ENCODE measurements at regions of chr1 and their contacts with region 1.

Region 1: DNA sequence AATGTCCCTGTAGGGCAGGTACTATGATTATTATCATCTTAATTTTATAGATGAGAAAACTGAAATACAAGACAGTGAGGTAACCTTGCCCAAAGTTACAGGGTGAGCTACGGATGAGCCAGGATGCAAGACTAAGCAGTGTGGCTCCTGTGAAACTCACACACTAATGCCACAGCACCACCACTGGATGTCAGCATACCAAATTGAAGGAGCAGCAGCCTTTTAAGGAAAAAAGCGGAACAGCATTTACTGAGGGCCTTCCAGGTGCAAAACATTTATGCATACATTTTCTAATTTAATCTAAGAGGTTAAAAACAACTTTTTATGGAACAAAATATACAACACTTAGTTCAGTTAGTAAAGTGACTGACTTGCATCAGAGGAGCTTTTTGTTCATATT is 41.7 kb downstream of the SEC16B start:
- DNase-seq: no peak
- H3K4me3 ChIP-seq: no peak overlapping the region
- H3K27me3 ChIP-seq: no peaks in the 10 kb centered on the region
- CTCF ChIP-seq: peak; percentile 43

Region 2: DNA sequence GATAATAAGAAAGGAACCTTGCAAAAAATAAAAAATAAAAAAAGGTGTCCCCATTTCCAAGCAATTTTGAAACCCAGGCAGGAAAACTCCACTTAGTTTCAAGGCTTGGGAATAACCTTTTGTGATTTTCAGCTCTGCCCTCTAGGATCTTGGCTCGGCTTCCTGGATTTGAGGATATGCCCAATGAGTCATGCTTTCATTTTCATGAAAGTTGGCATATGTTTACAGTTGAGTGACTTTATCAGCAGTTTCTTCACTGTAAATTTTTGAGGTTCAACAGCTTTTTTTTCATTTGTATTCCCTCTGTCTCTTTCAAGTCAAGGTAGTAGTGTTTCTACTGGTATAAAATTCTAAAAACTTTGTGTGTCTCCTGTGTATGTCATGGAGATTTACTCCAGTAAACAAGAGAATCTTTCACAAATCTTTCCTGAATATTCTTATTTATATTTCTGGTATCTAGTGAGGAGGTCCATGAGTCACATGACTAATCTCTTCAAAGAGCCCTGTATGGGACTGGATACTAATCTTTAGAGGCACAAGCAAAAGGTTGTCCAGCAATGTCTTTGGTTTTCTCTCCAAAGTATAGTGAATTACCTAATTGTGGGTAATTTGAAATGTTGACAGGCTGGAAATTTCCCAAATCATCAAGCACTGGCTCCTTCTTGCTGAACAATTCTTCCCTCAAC is 422.1 kb before region 1 on chr1:
- CTCF ChIA-PET with region 1: no interaction called
- POLR2A ChIA-PET with region 1: no interaction called
- DNase-seq: no peak
- H3K4me3 ChIP-seq: no peak overlapping the region
- H3K27me3 ChIP-seq: no peaks in the 10 kb centered on the region
- CTCF ChIP-seq: no peak

Region 3: DNA sequence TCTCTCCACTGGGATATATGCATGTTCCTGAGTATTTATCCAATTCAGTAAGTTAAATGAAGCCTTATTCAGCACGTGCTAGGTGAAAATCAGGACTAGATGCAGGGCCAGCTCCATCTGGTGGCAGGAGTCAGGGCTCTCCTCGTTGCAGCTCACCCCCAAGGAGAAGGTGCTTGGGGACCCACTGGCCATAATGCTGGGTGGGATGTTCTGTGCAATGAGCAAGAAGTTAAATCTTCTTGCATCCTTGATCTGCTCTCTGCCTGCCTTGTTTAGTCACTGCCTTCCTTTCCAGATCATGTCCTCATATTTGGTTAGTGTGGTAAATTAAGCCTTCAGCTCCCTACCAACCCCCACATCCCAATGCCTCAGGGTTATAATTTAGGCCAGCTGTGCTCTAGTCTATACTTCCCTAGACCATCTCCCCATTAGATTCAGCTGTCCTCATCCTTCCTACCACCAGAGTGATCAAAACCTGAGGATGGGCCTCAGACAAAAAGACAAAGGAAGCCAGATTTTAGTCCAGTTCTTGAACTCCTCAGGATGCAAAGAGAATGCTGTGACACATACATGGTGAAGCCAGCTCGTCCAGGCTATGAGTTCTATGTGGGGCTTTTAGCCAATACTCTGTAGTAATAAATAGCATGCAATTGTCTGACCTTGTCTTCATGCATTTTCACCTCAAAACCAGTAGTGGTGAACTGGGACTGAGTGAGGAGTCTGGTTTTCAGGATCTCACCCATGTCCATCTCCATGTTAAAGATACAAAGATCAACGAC is 14.2 kb before region 1 on chr1:
- CTCF ChIA-PET with region 1: interaction called, 47 read pairs
- POLR2A ChIA-PET with region 1: no interaction called
- DNase-seq: peak; percentile 4
- H3K4me3 ChIP-seq: no peak overlapping the region
- H3K27me3 ChIP-seq: no peaks in the 10 kb centered on the region
- CTCF ChIP-seq: peak; percentile 75

Region 4: DNA sequence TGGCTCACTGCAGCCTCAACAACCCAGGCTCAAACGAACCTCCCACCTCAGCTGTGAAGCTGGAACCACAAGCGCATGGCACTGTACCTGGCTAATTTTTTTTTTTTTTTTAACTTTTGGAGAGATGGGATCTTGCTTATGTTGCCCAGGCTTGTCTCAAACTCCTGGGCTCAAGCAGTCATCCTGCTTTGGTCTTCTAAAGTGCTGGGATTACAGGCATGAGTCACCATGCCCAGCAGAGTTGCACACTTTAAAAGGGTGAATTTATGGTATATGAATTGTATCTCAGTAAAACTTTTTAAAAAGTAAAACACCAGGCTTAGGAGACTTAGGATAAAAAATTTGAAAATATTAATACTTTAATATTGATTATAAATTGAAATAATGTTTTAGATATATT is 469.5 kb after region 1 on chr1:
- CTCF ChIA-PET with region 1: no interaction called
- POLR2A ChIA-PET with region 1: no interaction called
- DNase-seq: no peak
- H3K4me3 ChIP-seq: no peak overlapping the region
- H3K27me3 ChIP-seq: no peaks in the 10 kb centered on the region
- CTCF ChIP-seq: no peak